ENCODE measurements at regions of chr16 and their contacts with region 1.

Region 1: DNA sequence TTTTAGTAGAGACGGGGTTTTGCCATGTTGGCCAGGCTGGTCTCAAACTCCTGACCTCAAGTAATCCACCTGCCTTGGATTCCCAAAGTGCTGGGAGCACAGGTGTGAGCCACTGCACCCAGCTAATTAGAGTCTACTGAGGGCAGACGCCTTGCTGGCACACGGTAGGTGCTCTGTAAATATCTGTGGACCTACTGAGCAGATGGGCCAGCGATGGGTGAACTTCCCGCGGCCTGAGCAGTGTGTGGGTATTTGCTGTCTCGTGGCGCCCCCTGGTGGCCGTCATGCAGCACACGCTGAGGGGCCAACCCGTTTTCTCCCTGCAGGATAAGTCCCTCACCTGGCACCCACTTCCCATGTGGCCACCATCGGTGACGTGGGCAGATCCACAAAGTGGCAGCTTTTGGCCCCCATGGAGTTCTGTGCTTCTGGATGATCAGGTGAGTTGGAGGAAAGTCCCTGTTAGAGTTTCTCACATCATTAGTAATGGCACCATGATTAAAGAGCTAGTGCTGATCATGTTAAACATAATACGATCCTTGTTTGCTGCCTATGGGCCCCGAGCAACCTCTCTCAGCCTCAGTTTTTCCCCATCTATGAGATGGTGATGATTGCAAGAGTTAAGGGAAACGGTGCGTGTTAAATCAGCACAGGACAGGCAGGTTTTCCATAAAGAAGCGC is 40.7 kb downstream of the ZDHHC7 start:
- DNase-seq: peak; percentile 88
- ATAC-seq: peak; percentile 96
- H3K4me3 Mint-ChIP-seq: no peak overlapping the region
- H3K27ac Mint-ChIP-seq: no peak overlapping the region
- H3K4me1 Mint-ChIP-seq: no peaks in the 10 kb centered on the region
- H3K27me3 Mint-ChIP-seq: no peaks in the 10 kb centered on the region
- CTCF ChIP-seq: peak; percentile 98

Region 2: DNA sequence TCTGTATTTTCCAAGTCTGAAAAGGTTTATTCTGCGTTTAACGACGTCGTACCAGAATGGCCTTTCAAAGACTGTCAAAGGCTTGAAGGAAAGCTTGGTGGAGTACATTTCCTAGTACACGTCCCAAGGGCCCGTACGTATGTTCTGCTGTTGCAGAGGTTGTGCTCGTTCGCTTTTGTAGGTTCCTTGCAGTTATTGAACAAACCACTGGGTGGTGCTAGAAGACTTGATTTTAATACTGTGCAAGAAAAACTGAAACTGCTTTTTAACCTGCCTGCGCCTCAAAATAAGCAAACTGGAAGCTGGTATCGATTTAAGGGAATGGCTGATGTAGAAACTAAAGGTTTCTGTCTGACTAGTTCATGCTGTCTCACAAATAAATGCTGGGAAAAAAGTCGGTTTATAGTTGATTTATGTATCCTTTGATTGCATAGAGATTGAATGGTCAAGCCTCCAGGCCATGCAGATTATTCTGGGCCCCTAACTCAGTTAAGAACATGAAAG is 216.2 kb before region 1 on chr16:
- CTCF ChIA-PET with region 1: interaction called, 37 read pairs
- POLR2A ChIA-PET with region 1: no interaction called
- DNase-seq: peak; percentile 65
- ATAC-seq: peak; percentile 88
- H3K4me3 Mint-ChIP-seq: no peak overlapping the region
- H3K27ac Mint-ChIP-seq: 0 out of 2 replicates have a peak overlapping the region, but pooled peaks have one; percentile 48
- H3K4me1 Mint-ChIP-seq: peaks cover 47% of the 10 kb centered on the region
- H3K27me3 Mint-ChIP-seq: no peaks in the 10 kb centered on the region
- CTCF ChIP-seq: peak; percentile 63

Region 3: DNA sequence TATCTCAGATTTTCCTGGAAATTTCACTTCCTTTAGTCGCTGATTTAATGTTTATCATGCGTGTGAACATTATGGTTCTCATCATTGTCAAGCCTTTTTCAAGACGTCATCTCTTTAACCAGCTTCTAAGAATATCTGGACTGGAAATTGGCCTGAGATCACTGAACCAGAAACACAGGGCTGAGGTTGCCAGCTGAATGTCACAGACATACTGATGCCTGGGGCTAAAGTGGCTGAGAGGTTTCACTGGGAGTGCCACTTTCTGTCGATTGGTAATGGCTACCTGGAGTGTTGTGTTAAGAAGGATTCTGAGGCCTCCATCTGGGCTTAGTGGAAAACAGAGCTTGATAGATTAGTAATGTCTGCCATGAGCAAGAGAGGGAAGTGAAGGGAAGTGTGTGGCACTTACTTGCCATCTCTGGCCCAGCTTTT is 96.6 kb before region 1 on chr16:
- CTCF ChIA-PET with region 1: no interaction called
- POLR2A ChIA-PET with region 1: no interaction called
- DNase-seq: no peak
- ATAC-seq: no peak
- H3K4me3 Mint-ChIP-seq: no peak overlapping the region
- H3K27ac Mint-ChIP-seq: no peak overlapping the region; the same call in 1 of the 2 replicates
- H3K4me1 Mint-ChIP-seq: peaks cover 6% of the 10 kb centered on the region
- H3K27me3 Mint-ChIP-seq: no peaks in the 10 kb centered on the region
- CTCF ChIP-seq: no peak

Region 4: DNA sequence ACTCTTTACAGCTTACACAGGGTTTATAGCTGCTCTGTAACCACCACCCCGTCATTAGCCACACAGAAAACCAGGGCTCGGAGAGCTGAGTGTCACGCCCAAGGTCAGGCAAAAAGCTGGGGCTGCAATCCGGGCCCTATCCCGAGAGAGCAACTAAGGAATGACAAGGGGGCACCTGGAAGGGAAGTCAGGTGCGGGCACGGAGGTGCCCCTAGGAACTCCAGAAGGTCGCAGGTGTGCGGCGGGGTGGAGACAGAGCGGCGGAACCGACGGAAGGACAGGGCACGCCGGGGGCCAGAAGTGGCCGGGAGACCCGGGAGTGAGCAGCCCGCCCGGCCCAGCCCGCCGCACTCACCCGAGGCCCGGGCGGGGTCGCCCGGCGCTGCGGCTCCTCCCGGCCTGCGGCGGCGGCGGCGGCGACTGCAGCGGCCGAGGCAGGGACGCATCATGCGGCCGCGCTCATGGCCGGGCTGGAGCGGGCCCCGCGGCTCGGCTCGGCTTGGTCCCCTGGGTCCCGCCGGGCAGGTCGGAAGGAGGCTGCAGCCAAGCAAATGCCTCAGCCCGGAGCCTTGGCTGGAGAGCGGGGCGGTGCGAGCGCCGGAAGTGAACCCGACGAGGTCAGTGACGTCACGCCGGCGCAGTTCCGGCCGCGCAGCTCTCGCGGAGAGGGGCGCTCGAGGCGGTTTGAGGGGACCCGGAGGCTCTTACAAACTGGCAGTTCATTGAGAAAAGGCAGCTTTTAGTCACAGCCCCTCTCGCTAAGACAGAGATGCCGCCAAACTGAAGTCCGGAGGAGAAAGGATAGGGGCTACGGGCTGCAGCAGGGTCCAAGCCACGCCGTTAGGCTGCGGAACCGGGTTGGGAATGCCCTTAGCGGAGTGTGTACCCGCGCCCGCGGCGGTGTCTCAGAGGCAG is 40.6 kb after region 1 on chr16 and contains the start of gene ZDHHC7:
- CTCF ChIA-PET with region 1: no interaction called
- POLR2A ChIA-PET with region 1: no interaction called
- DNase-seq: peak; percentile 87
- ATAC-seq: peak; percentile 92
- H3K4me3 Mint-ChIP-seq: peak within 1 kb of the TSS; percentile 97
- H3K27ac Mint-ChIP-seq: peak within 1 kb of the TSS; percentile 99
- H3K4me1 Mint-ChIP-seq: peaks cover 9% of the 10 kb centered on the region
- H3K27me3 Mint-ChIP-seq: no peaks in the 10 kb centered on the region
- CTCF ChIP-seq: no peak
- total RNA-seq, gene ZDHHC7: 35.7 to 38.7 TPM (median 38.1 TPM) in 3 replicates